Dendritic cell treated with granulocyte-macrophage colony-stimulating factor and Interleukin-4, amounts not matched to agents 40 ng/mL and 50 ng/mL, for 4 days (primary cell): ENCODE measurements at regions of chr10 and their contacts with region 1.

Region 1: GRCh38 chr10:98374217-98374980 is 40.6 kb downstream of the PYROXD2 start:
- H3K4me3 Mint-ChIP-seq: peak overlapping the region; percentile 76
- H3K27ac Mint-ChIP-seq: peak overlapping the region; percentile 95
- H3K4me1 Mint-ChIP-seq: peaks cover 82% of the 10 kb centered on the region
- H3K27me3 Mint-ChIP-seq: peaks cover 2% of the 10 kb centered on the region

Region 2: DNA sequence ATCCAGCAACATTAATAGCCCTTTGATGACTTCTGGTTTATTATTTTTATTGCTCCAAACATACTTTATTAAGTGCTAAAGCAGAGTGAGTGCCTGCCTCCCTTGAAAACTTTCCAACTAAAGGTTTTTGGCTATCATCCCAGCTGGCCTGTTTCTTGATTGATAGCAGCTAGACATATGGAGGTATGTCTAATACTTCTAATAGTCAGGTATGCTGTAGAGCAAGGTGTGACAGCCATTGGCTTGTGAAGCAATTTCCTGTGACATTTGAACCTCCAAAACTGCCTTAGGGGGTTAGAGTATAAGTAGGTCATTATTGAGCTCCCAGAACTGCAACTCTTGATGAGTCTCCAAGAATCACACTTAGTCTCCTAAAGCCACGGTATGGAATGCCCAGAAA is 162.2 kb before region 1 on chr10:
- intact Hi-C with region 1: no loop called
- H3K4me3 Mint-ChIP-seq: no peak overlapping the region
- H3K27ac Mint-ChIP-seq: no peak overlapping the region
- H3K4me1 Mint-ChIP-seq: peaks cover 8% of the 10 kb centered on the region
- H3K27me3 Mint-ChIP-seq: no peaks in the 10 kb centered on the region

Region 3: DNA sequence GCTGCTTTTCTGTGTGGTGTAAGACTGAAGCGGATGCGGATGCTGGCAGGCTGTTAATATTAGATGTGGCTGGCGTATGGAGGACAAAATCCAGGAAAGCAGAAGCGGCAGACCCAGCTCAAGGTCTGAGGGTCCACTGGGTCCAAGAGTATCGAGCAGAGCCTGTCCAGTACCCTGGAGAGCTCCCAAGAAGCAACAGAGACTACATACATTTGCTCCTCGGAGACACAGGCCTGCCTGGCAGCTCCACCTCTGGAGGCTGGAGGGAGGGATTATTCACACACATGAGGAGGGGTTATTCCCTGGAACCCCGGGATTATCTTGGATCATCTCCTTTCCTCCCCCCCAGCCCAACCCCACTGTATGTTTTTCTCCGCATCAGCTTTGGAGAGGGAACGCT is 75.1 kb before region 1 on chr10:
- intact Hi-C with region 1: no loop called
- H3K4me3 Mint-ChIP-seq: no peak overlapping the region
- H3K27ac Mint-ChIP-seq: no peak overlapping the region
- H3K4me1 Mint-ChIP-seq: peaks cover 21% of the 10 kb centered on the region
- H3K27me3 Mint-ChIP-seq: peaks cover 43% of the 10 kb centered on the region

Region 4: GRCh38 chr10:98323221-98324164 is 50.9 kb before region 1 on chr10:
- intact Hi-C with region 1: loop called (anchors 10 kb)
- H3K4me3 Mint-ChIP-seq: no peak overlapping the region
- H3K27ac Mint-ChIP-seq: peak overlapping the region; percentile 55
- H3K4me1 Mint-ChIP-seq: peaks cover 36% of the 10 kb centered on the region
- H3K27me3 Mint-ChIP-seq: peaks cover 16% of the 10 kb centered on the region

Region 5: DNA sequence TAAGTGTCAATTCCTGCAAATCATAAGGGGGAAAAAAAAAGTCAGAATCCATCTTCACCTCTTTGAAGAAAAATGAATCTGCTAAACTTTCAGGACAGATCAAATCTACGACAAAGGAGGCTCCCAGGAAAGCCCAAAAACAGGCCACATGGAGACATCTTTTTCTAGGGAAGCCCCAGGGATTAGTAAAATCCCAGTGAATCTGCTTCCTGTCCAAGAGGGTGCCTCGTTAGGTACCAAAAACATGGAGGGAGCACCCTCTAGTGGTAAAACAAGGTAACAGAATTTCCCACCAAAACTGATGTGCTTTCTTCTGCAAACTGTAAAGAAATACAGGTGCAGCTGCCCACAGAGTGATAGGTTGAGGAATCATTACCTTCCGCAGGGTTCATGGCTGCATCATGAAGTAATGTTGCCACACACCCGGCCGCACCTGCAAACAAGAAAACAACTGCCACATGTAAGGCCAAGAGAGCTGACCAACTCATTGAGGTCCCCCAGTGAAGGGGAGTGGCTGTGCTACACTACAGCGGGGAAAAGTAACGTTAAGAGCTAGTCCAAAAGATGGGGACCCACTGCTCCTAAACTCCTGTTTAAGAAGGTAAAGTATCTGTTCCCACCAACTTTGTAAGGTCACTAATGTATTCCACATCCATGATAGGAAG is 1237.9 kb after region 1 on chr10:
- intact Hi-C with region 1: no loop called
- H3K4me3 Mint-ChIP-seq: no peak overlapping the region
- H3K27ac Mint-ChIP-seq: no peak overlapping the region
- H3K4me1 Mint-ChIP-seq: peaks cover 23% of the 10 kb centered on the region
- H3K27me3 Mint-ChIP-seq: no peaks in the 10 kb centered on the region